ENCODE measurements at regions of chr15 and their contacts with region 1.

Region 1: GRCh38 chr15:49421991-49422390 is 1.1 kb upstream of the FGF7 start:
- DNase-seq: peak; percentile 39 to 62
- ATAC-seq: peak; percentile 62 to 94 (median 75)
- H3K4me3 ChIP-seq: peak overlapping the region; percentile 53
- H3K27ac ChIP-seq: no peak overlapping the region
- H3K4me1 ChIP-seq: no peaks in the 10 kb centered on the region
- H3K27me3 ChIP-seq: no peaks in the 10 kb centered on the region
- CTCF ChIP-seq: peak; percentile 83

Region 2: DNA sequence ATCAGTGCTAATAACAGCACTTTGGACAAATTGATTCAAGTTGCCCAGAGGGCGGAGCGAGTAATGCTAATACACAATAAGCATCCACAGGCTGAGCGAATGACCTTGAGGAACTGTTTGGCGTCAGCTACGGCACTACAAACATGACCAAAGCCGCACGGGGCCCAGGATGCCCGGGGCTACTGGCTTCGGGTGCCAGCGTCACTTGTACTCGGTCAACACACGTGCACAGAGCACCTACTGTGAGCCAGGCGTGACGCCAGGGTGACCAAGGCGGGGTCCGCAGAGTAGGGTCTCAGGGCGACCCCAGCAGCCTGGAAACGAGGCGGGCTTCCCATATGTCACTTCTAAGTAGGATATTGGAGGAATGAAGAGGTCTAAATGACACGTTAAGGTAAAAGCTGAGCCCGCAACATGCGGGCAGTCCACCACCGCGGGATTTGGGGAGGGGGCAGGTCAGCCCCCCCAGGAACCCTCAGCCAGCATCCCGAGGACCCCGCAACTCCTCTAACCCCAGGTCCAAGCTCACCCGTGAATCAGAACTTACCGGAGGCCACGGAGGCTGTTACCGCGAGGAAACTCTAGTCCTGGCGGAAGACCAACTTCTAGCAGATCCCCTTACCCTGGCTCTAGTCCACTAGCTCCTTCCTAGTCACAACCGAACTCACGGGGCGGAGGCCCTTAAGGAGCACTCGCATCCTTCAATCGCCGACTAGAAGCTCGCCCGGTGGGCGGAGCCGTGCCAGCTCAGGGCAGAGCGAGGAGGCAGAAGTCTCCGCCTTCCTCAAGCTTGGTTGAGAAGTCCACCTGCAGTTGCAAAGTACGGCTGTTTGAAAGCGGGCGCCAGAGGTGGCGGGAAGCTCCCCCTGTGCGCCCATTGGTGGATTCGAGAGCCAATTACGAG is 611.3 kb before region 1 on chr15 and contains the start of gene CEP152:
- intact Hi-C with region 1: loop called in 1 of 2 experiments (anchors 10 kb)
- DNase-seq: peak; percentile 96 to 98
- ATAC-seq: peak; percentile 99 to 100 (median 100)
- H3K4me3 ChIP-seq: peak within 1 kb of the TSS; percentile 84
- H3K27ac ChIP-seq: no peak within 1 kb of the TSS
- H3K4me1 ChIP-seq: no peaks in the 10 kb centered on the region
- H3K27me3 ChIP-seq: no peaks in the 10 kb centered on the region
- CTCF ChIP-seq: no peak
- total RNA-seq, gene CEP152: 0.58 to 1.3 (median 0.89) TPM

Region 3: GRCh38 chr15:49235446-49236124 is 186.4 kb before region 1 on chr15:
- intact Hi-C with region 1: loop called (anchors 1 to 2 kb)
- DNase-seq: peak; percentile 30 to 46
- ATAC-seq: peak; percentile 76 to 95 (median 78)
- H3K4me3 ChIP-seq: no peak overlapping the region
- H3K27ac ChIP-seq: no peak overlapping the region
- H3K4me1 ChIP-seq: no peaks in the 10 kb centered on the region
- H3K27me3 ChIP-seq: no peaks in the 10 kb centered on the region
- CTCF ChIP-seq: peak; percentile 82

Region 4: DNA sequence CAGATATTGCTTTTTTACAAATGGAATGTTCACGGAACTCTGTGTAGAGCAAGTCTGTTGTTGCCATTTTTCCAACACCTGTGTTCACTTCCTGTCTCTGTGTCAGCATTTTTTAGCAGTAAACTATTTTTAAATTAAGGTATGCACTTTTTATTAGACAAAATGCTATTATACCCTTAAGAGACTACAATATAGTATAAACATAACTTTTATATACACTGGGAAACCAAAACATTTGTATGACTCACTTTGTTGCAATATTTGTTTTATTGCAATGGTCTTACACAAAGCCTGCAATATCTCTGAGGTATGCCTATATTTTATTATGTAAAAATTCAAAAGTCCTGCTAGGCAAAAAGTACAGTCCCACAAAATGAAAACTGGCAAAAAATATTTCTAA is 38.7 kb before region 1 on chr15:
- intact Hi-C with region 1: no loop called
- DNase-seq: no peak
- ATAC-seq: no peak
- H3K4me3 ChIP-seq: no peak overlapping the region
- H3K27ac ChIP-seq: no peak overlapping the region
- H3K4me1 ChIP-seq: no peaks in the 10 kb centered on the region
- H3K27me3 ChIP-seq: no peaks in the 10 kb centered on the region
- CTCF ChIP-seq: no peak

Region 5: DNA sequence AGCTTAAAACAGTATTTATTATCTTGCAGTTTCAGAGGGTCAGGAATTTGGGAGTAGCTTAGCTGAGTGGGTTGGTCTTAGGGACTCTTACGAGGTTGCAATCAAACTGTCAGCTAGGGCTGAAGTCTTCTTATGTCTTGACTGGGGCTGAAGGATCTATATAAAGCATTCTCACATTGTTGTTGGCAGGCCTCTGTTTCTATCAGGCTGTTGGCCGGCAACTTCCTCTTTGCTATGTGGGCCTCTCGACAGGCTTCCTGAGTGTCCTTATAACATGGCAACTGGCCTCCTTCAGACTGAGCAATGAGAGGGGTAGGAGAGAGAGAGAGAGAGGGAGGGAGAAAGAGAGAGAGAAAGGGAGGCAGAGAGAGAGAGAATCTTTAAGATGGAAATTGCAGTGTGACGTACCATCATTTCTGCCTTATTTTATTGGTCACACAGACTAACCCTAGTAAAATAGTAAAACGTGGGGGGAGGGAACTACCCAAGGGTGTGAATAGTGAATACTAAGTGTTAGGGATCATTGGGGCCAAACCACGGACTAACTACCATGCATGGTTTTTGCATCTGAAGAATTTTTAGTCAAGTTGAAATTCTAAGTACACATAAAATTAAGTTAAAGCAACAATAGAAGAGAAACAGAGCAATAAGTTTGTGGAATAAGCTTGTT is 17.1 kb after region 1 on chr15:
- intact Hi-C with region 1: no loop called
- DNase-seq: no peak
- ATAC-seq: no peak
- H3K4me3 ChIP-seq: no peak overlapping the region
- H3K27ac ChIP-seq: no peak overlapping the region
- H3K4me1 ChIP-seq: no peaks in the 10 kb centered on the region
- H3K27me3 ChIP-seq: no peaks in the 10 kb centered on the region
- CTCF ChIP-seq: no peak

Region 6: DNA sequence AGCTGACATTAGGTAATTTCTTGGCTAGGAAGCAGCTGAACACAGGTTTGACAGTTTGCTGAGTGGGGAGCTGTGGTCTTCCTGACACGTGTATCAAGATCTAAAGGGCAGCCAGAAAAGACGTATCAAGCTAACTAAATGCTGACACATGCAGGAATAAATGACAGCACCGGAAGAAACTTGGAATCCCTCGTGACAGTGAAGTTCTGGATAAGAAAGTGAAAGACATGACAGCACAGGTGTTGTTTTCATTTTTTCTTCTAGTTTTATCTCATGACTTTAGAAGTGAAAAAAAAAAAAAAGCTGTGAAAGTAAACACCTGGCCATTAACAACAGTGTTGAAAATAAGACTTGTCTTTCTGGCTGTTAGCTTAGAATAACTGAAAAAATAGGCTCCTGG is 49.7 kb after region 1 on chr15:
- intact Hi-C with region 1: no loop called
- DNase-seq: no peak
- ATAC-seq: no peak
- H3K4me3 ChIP-seq: no peak overlapping the region
- H3K27ac ChIP-seq: no peak overlapping the region
- H3K4me1 ChIP-seq: no peaks in the 10 kb centered on the region
- H3K27me3 ChIP-seq: no peaks in the 10 kb centered on the region
- CTCF ChIP-seq: no peak

Region 7: GRCh38 chr15:50145451-50145872 is 723.5 kb after region 1 on chr15:
- intact Hi-C with region 1: loop called in 1 of 2 experiments (anchors 10 kb)
- DNase-seq: no peak
- ATAC-seq: peak; percentile 70 to 86 (median 83)
- H3K4me3 ChIP-seq: no peak overlapping the region
- H3K27ac ChIP-seq: no peak overlapping the region
- H3K4me1 ChIP-seq: no peaks in the 10 kb centered on the region
- H3K27me3 ChIP-seq: no peaks in the 10 kb centered on the region
- CTCF ChIP-seq: peak; percentile 56

Measured in psoas muscle (tissue), 8 donors.